Heart left ventricle (tissue), 16 donors: ENCODE measurements at regions of chr16 and their contacts with region 1.

Region 1: GRCh38 chr16:88569985-88570690 is at the start of gene ZC3H18:
- DNase-seq: peak; percentile 97 to 99 (median 99)
- ATAC-seq: peak; percentile 88 to 98 (median 98)
- H3K4me3 ChIP-seq: peak within 1 kb of the TSS; percentile 54 to 98 (median 92)
- H3K27ac ChIP-seq: peak within 1 kb of the TSS; percentile 56 to 88 (median 81)
- H3K4me1 ChIP-seq: peaks cover 3 to 27% (median 22%) of the 10 kb centered on the region in 12 donors
- H3K27me3 ChIP-seq: no peaks in the 10 kb centered on the region
- CTCF ChIP-seq: no peak
- POLR2A ChIP-seq: peak in 1 of 2 donors; percentile 75
- total RNA-seq, gene ZC3H18: 8.4 to 28.4 (median 21.9) TPM

Region 2: GRCh38 chr16:87765776-87766484 is 804.2 kb before region 1 on chr16 and contains the start of gene KLHDC4:
- intact Hi-C with region 1: loop called in 4 of 10 experiments (anchors 10 kb)
- DNase-seq: peak; percentile 89 to 93 (median 91)
- ATAC-seq: peak; percentile 81 to 96 (median 94)
- H3K4me3 ChIP-seq: peak within 1 kb of the TSS; percentile 81 to 97 (median 93)
- H3K27ac ChIP-seq: peak within 1 kb of the TSS; percentile 57 to 93 (median 84)
- H3K4me1 ChIP-seq: peaks cover 3 to 26% (median 9%) of the 10 kb centered on the region in 12 donors
- H3K27me3 ChIP-seq: peaks cover 0 to 4% (median 0%) of the 10 kb centered on the region in 9 donors
- CTCF ChIP-seq: no peak
- POLR2A ChIP-seq: peak in 1 of 2 donors; percentile 72
- total RNA-seq, gene KLHDC4: 6.8 to 19.2 (median 13.7) TPM

Region 3: DNA sequence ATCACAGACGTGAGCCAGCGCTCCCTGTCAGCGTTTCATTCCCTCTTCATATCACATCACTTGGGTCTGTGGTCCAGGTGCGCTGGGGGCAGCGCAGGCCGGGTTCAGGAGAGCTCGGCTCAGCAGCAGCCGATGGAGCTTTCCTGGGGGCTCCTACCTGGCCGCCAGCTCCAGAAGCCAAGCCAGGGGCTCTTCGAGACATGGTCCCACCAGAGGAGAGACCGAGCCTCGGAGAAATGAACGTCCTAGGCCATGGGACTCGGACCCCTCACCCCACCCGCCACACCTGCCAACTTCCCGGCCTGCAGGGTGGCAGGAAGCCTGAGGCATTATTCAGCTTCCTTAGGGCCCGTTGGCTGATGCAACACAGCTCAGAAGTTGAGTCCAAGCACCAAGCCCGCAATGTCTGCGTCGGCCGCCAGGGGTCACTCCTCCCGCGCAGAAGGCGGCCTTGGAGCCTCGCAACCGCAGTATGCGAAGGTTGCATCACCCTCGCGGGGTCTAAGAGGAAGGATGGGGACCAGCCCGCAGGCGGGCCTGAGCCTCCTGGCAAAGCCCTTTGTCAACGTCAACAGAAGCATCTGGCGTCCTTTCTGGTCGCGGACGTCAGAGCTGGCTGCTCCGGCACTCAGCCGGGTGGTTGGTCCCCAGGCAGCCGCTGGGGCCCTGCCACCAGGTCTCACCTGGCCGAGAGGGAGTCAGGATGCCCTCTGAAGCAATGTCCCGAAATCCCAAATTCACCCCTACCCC is 791.1 kb before region 1 on chr16:
- intact Hi-C with region 1: loop called in 1 of 10 experiments (anchors 10 kb)
- DNase-seq: peak; percentile 80 to 94 (median 89)
- ATAC-seq: peak; percentile 81 to 94 (median 92)
- H3K4me3 ChIP-seq: no peak overlapping the region
- H3K27ac ChIP-seq: peak overlapping the region in 1 of 12 donors; percentile 49
- H3K4me1 ChIP-seq: peaks cover 0 to 41% (median 7%) of the 10 kb centered on the region in 12 donors
- H3K27me3 ChIP-seq: peaks cover 0 to 9% (median 0%) of the 10 kb centered on the region in 9 donors
- CTCF ChIP-seq: peak; percentile 94 to 100 (median 97)
- POLR2A ChIP-seq: no peak

Region 4: DNA sequence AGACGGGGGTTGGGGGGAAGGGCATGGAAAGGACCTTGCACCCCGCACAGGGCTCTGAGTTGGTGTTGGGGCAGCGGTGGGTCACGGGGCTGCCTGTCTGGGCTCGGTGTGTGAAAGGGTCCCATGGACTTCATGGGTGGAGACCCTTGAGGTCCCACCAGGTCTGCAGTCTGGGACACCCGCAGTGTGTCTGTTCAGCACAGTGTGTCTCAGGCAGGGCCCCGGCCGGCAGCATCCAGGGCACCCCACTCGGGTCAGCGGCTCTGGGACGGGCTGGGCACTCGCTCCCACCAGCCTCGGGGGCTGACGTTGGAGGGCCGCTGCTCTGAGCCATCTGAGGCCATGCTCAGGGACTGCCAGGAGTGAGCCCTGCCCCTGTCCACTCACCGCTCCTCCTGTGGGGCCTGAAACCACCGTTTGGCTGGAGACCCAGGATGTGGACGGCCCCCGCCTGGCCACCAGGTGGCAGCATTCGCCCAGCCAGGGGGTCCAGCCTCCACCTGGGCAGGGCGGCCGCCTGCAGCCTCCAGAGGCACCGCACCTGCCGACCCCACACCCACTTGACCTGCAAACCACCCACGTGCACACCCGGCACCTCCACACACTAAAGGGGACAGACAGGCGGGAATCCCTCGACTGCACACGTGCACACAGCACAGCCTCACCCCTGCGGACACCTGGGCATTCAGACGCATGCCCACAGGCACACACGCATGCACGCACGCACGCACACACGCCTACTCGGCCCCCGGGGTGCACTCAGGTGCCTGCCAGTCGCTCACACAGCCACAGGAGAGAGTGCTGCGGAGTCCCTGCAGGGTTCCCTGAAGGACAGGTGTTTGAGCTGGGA is 127.2 kb before region 1 on chr16:
- intact Hi-C with region 1: loop called in 1 of 10 experiments (anchors 10 kb)
- DNase-seq: peak; percentile 73 to 90 (median 76)
- ATAC-seq: peak; percentile 71 to 89 (median 85)
- H3K4me3 ChIP-seq: no peak overlapping the region
- H3K27ac ChIP-seq: no peak overlapping the region
- H3K4me1 ChIP-seq: peaks cover 0 to 9% (median 0%) of the 10 kb centered on the region in 12 donors
- H3K27me3 ChIP-seq: peaks cover 0 to 15% (median 0%) of the 10 kb centered on the region in 9 donors
- CTCF ChIP-seq: peak; percentile 93 to 98 (median 94)
- POLR2A ChIP-seq: no peak

Region 5: DNA sequence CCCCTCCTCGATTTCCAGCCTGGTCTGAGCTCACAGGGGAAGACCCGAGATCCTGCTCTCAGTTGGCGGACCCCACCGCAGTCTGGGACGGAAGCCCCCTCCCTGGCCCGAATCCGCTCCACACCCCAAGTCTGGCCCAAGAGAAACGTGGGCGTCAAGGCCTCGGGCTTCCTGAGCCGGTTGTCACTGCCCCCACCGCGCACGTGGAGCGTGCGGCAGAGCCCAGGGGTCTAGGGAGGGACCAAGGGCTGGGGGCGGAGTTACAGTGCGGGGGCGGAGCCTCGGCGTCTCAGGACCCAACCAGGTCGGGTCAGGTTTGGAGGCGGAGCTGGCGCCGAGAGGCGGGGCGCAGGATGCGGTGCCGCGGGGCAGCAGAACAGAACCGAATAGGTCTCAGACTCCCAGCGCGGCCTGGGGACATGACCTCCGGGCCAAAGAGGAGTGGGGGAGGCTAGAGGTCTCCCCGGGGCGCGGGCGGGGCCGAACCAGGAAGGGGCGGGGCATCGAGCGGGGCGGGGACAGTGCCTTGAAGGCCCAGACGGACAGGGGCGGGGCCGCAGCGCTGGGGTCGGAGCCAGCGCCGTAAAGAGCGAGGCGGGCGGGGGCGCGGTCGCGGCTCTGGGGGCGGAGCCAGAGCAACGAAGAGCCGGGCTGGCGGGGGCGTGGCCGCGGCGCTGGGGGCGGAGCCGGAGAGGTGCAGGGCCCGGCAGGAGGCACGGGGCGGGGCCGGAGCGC is 117.5 kb before region 1 on chr16:
- intact Hi-C with region 1: loop called in 2 of 10 experiments (anchors 1 to 10 kb)
- DNase-seq: peak; percentile 97 to 99 (median 98)
- ATAC-seq: peak; percentile 87 to 92 (median 92)
- H3K4me3 ChIP-seq: peak overlapping the region; percentile 27 to 85 (median 64)
- H3K27ac ChIP-seq: peak overlapping the region in 11 of 12 donors; percentile 26 to 79 (median 69)
- H3K4me1 ChIP-seq: peaks cover 7 to 45% (median 27%) of the 10 kb centered on the region in 12 donors
- H3K27me3 ChIP-seq: peaks cover 0 to 22% (median 0%) of the 10 kb centered on the region in 9 donors
- CTCF ChIP-seq: no peak
- POLR2A ChIP-seq: no peak

Region 6: GRCh38 chr16:88706288-88706964 is 136.3 kb after region 1 on chr16 and contains the starts of genes CTU2 and RNF166:
- intact Hi-C with region 1: loop called in 4 of 10 experiments (anchors 1 to 5 kb)
- DNase-seq: peak; percentile 92 to 97 (median 95)
- ATAC-seq: peak; percentile 58 to 92 (median 85)
- H3K4me3 ChIP-seq: peak within 1 kb of the TSS; percentile 76 to 100 (median 97)
- H3K27ac ChIP-seq: peak within 1 kb of the TSS; percentile 61 to 97 (median 86)
- H3K4me1 ChIP-seq: peaks cover under 1 to 59% (median 48%) of the 10 kb centered on the region in 12 donors
- H3K27me3 ChIP-seq: no peaks in the 10 kb centered on the region
- CTCF ChIP-seq: peak in 1 of 12 donors; percentile 20
- POLR2A ChIP-seq: peak; percentile 56 to 92
- total RNA-seq, gene CTU2: 6.5 to 20.8 (median 12.3) TPM
- total RNA-seq, gene RNF166: 9.3 to 28.5 (median 15.4) TPM